Gastrocnemius medialis (tissue), 4 donors: ENCODE measurements at regions of chr22 and their contacts with region 1.

Region 1: DNA sequence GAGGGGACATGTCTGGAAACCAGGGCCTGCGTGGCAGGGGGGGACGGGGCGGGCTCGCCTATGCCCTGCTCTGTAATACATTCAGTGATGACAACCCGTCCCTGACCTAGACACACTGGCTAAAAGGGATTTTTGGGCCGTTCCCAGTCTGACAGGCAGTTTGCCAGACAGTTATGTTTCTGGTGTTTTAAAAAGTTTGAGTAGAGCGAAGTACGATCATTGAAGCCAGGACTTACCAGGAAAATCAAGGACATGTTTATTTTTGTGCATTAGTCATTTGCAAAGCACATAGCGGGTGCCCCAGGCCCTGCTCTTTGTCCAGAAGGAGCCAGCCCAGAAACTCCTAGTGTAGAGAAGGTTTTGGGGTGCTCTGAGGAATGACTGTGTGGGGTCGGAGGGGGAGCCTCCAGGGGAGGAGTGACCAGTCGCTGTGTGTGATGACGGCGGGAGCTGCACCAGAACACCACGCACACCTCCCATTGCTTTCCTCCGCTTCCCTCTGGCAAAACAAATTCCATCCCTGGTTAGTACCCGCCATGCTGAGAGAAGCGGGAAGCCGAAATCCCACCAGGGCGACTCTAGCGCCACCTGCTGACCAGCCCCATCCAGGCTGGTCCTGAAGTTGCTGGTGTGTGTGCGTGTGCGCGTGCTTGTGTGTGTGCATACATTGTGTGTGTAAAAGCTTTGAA is 50.8 kb downstream of the FBLN1 start:
- DNase-seq: peak; percentile 41 to 54
- ATAC-seq: peak; percentile 74 to 78
- H3K4me3 ChIP-seq: no peak overlapping the region
- H3K27ac ChIP-seq: peak overlapping the region; percentile 56 to 68 (median 60)
- H3K4me1 ChIP-seq: peaks cover 0 to 19% of the 10 kb centered on the region in 2 donors
- H3K27me3 ChIP-seq: no peaks in the 10 kb centered on the region
- CTCF ChIP-seq: peak; percentile 75 to 95 (median 88)
- POLR2A ChIP-seq: no peak

Region 2: DNA sequence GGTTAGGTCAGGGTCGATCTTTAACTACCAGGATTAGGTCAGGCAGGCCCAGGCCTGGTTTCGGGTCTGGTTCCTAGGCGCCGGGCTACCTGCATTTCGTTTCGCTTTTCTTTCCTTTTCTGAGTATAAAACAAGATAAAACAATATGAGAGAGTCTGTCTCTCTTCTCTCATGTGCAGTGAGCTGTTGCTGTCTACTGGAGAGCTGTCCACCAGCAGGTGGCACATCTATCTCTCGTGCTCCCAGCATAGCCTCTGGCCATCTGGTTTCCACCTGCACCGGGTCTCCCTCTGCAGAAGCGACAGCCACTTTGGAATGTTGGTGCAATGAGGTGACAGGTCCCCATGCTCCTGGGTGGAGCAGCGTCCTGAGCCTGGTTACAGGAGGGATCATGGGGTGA is 112.4 kb before region 1 on chr22:
- in situ Hi-C with region 1: loop called (anchors 5 to 10 kb)
- intact Hi-C with region 1: loop called (anchors 1 kb)
- DNase-seq: peak in 1 of 2 donors; percentile 27
- ATAC-seq: peak; percentile 54 to 62
- H3K4me3 ChIP-seq: no peak overlapping the region
- H3K27ac ChIP-seq: no peak overlapping the region
- H3K4me1 ChIP-seq: no peaks in the 10 kb centered on the region
- H3K27me3 ChIP-seq: no peaks in the 10 kb centered on the region
- CTCF ChIP-seq: peak in 4 of 5 experiments; percentile 44 to 62 (median 56)
- POLR2A ChIP-seq: no peak

Region 3: DNA sequence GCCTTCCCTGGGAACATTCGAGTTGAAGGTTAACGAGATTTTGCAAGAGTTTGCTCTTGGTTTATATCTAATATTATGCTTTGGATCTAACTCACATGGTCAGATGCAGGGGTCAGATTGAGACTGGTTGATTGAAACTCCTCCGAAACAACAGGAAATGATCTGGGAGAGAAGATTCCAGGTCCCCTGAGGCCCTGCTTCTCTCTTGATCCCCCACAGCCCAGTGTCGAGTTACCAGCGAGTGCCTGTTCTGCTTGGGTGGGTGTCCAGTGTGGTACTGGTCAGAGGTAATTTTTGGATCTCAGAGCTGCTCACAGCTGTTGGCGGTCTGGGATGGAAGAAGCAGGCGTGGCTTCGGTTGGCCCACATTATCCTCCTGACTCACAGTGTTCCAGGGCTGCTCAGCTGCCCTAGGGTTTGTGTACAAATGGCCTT is 41.6 kb before region 1 on chr22:
- in situ Hi-C with region 1: no loop called
- intact Hi-C with region 1: loop called (anchors 5 kb)
- DNase-seq: peak; percentile 78 to 84
- ATAC-seq: peak; percentile 89 to 96
- H3K4me3 ChIP-seq: no peak overlapping the region
- H3K27ac ChIP-seq: peak overlapping the region; percentile 77 to 81 (median 80)
- H3K4me1 ChIP-seq: peaks cover 10 to 15% of the 10 kb centered on the region in 2 donors
- H3K27me3 ChIP-seq: no peaks in the 10 kb centered on the region
- CTCF ChIP-seq: no peak
- POLR2A ChIP-seq: peak; percentile 34 to 39

Region 4: DNA sequence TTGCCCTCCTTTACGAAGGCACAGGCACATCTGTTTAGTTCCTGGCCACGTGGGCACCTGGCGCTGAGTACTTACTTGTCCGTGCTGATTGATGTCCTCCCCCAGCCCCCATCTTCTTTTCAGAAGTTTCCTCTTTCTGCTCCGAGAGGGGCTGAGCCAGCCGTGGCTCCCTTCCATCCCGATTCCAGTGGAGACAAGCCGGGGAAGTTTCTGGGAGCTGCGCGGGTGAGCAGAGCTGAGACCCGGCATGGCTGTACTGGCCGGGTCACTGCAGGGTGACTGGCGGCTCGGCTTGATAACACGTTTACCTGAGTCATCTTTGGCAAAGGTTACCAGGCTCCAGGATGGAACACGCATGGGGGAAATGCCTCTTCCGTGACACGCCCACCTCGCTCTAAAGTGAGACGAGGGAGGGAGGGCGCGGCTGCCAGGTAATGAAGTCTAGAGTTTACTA is 72.7 kb after region 1 on chr22:
- in situ Hi-C with region 1: no loop called
- intact Hi-C with region 1: no loop called
- DNase-seq: no peak
- ATAC-seq: no peak
- H3K4me3 ChIP-seq: no peak overlapping the region
- H3K27ac ChIP-seq: no peak overlapping the region
- H3K4me1 ChIP-seq: no peaks in the 10 kb centered on the region
- H3K27me3 ChIP-seq: peaks cover 9 to 23% (median 10%) of the 10 kb centered on the region in 3 donors
- CTCF ChIP-seq: no peak
- POLR2A ChIP-seq: no peak